ENCODE measurements at regions of chr2 and their contacts with region 1.

Region 1: DNA sequence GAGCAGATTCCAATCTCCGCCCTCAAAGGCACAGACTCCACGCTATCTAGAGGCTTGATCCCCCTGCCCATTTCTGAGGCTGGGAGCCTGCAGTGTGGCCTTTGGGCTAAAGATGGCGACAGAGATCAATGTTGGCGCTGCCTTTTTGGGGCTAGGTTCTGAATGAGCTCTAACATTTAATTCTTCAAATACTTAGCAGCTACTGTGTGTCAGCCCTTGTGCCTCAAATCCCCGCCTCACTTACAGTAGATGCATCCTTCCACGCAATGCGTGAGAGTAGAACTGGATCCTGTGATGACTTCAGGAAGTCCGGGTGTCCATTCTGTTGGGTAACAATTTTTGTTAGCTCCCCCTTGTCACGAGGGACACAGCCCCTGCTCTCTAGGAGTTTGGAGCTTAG is 12.4 kb downstream of the IL1F10 start:
- DNase-seq: peak; percentile 67
- H3K4me3 Mint-ChIP-seq: no peak overlapping the region
- H3K27ac Mint-ChIP-seq: no peak overlapping the region
- H3K4me1 Mint-ChIP-seq: peaks cover 1% of the 10 kb centered on the region
- H3K27me3 Mint-ChIP-seq: peaks cover 40% of the 10 kb centered on the region

Region 2: DNA sequence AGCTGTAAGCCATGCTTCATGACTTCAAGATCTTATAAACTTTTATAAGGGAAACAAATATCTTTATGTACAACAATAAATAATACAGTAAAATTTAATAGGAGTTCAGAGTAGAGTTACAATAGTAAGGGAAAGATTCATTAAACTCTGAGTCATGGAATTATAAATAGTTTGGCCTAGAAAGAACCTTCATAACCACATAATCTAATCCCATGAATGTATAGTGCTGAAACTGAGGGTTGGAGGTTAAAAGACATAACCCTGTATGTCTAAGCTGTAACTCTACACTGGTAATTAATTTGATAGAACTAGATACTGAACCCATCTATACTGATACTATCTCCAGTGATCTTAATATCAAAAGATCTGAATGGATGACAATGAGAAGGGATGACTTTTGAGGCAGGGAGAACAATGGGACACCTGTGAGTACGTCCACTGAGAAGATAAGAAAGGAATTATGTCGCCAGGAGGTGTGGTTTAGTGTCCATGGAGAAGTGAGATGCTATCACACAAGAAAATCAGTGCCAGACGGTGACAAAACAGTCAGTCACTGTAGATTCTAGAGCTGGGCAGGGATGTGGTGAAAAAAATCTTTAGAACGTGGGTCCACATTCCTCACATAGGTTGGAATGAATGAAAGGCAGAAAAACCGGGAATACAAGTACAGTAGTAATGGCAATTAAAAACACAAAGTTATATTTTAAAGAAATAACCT is 11.3 kb before region 1 on chr2:
- CTCF ChIA-PET with region 1: interaction called, 12 read pairs
- DNase-seq: no peak
- H3K4me3 Mint-ChIP-seq: no peak overlapping the region
- H3K27ac Mint-ChIP-seq: no peak overlapping the region
- H3K4me1 Mint-ChIP-seq: no peaks in the 10 kb centered on the region
- H3K27me3 Mint-ChIP-seq: peaks cover 22% of the 10 kb centered on the region

Region 3: DNA sequence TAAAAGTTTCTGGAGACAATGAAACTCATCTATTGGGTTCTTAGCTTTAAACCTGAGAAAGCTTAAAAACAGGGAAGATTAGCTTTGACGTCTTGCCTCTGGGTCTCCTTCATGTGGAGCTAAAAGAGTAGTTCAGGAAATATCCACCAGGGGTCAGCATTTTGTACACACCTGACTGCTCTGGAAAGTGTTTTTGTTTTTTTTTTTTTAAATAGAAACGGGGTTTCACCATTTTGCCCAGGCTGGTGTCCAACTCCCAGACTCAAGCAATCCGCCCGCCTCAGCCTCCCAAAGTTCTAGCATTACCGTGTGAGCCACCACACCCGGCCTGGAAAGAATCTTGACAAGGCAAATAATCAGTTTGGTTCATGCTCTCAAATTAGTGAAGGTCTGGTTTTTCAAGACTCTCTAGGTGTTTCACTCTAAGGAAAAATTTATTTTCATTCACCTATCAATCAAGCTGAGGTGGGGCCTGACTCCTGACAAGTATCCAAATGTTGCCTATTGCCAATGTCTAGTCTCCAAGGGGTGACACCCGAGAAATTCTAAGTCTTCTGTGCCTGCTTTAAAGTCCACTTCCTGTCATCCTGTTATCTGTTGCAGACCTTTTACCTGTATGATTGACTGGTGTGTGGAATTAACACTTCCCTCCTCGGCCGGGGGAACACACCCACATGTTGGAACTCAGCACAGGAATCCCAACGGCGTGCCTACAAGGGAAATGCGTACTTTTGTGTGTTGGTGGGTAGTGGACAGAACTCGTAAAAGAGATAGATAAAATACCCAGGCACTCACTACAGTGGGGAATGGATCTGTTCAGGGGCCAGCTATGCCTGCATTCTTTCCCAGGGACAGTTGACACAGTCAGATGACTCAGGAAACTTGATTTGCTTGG is 58.5 kb after region 1 on chr2:
- CTCF ChIA-PET with region 1: interaction called, 226 read pairs
- DNase-seq: peak; percentile 61
- H3K4me3 Mint-ChIP-seq: no peak overlapping the region
- H3K27ac Mint-ChIP-seq: peak overlapping the region; percentile 42
- H3K4me1 Mint-ChIP-seq: peaks cover 28% of the 10 kb centered on the region
- H3K27me3 Mint-ChIP-seq: peaks cover 7% of the 10 kb centered on the region

Region 4: GRCh38 chr2:113198790-113199612 is 118.9 kb after region 1 on chr2:
- CTCF ChIA-PET with region 1: interaction called, 45 read pairs
- DNase-seq: peak; percentile 84
- H3K4me3 Mint-ChIP-seq: no peak overlapping the region
- H3K27ac Mint-ChIP-seq: no peak overlapping the region
- H3K4me1 Mint-ChIP-seq: peaks cover 58% of the 10 kb centered on the region
- H3K27me3 Mint-ChIP-seq: no peaks in the 10 kb centered on the region

Region 5: GRCh38 chr2:113337809-113338208 is 257.7 kb after region 1 on chr2:
- CTCF ChIA-PET with region 1: no interaction called
- DNase-seq: no peak
- H3K4me3 Mint-ChIP-seq: no peak overlapping the region
- H3K27ac Mint-ChIP-seq: no peak overlapping the region
- H3K4me1 Mint-ChIP-seq: peaks cover 3% of the 10 kb centered on the region
- H3K27me3 Mint-ChIP-seq: peaks cover 38% of the 10 kb centered on the region

Measured in activated naive CD4-positive, alpha-beta T cell treated with anti-CD3 and anti-CD28 coated beads, Interleukin-2, amount 10 ng/mL, durations not matched to agents 7 days and 5 days (primary cell).